Esophagus squamous epithelium (tissue), 5 donors: ENCODE measurements at regions of chr3 and their contacts with region 1.

Region 1: DNA sequence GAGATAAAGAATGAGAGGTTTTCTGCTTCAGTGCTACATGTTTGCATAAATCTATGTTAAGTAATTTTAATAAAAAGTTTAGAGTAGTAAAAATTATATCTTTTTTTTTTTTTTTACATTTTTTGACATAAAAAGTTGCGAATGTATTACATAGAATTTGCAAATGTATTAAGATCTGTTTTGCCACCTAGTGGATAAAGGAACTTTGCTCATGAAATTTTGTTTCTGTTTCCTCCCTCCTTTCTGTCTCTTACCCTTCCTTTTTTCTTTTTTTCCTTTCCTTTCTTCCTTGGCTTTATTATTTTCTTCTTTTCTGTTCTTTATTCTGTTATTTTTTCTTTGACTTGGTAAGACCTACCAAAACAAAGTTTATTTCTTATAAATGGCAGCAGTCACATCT is 58.5 kb upstream of the UTS2B start:
- DNase-seq: no peak
- H3K4me3 ChIP-seq: no peak overlapping the region
- H3K27ac ChIP-seq: no peak overlapping the region
- H3K4me1 ChIP-seq: no peaks in the 10 kb centered on the region
- H3K27me3 ChIP-seq: no peaks in the 10 kb centered on the region
- CTCF ChIP-seq: peak in 3 of 6 experiments; percentile 17 to 31 (median 24)
- POLR2A ChIP-seq: no peak

Region 2: GRCh38 chr3:191244242-191244867 is 144.5 kb before region 1 on chr3:
- intact Hi-C with region 1: loop called (anchors 5 kb)
- DNase-seq: no peak
- H3K4me3 ChIP-seq: no peak overlapping the region
- H3K27ac ChIP-seq: no peak overlapping the region
- H3K4me1 ChIP-seq: no peaks in the 10 kb centered on the region
- H3K27me3 ChIP-seq: no peaks in the 10 kb centered on the region
- CTCF ChIP-seq: peak in 5 of 6 experiments; percentile 5 to 60 (median 35)
- POLR2A ChIP-seq: no peak